ENCODE measurements at regions of chr3 and their contacts with region 1.

Region 1: GRCh38 chr3:190321789-190322603 is at the start of gene CLDN1:
- DNase-seq: peak; percentile 66
- H3K4me3 Mint-ChIP-seq: peak within 1 kb of the TSS; percentile 81
- H3K27ac Mint-ChIP-seq: peak within 1 kb of the TSS; percentile 5
- H3K4me1 Mint-ChIP-seq: peaks cover 51% of the 10 kb centered on the region
- H3K27me3 Mint-ChIP-seq: peaks cover 10% of the 10 kb centered on the region
- total RNA-seq, gene CLDN1: 5.7 and 6.0 TPM in 2 replicates

Region 2: DNA sequence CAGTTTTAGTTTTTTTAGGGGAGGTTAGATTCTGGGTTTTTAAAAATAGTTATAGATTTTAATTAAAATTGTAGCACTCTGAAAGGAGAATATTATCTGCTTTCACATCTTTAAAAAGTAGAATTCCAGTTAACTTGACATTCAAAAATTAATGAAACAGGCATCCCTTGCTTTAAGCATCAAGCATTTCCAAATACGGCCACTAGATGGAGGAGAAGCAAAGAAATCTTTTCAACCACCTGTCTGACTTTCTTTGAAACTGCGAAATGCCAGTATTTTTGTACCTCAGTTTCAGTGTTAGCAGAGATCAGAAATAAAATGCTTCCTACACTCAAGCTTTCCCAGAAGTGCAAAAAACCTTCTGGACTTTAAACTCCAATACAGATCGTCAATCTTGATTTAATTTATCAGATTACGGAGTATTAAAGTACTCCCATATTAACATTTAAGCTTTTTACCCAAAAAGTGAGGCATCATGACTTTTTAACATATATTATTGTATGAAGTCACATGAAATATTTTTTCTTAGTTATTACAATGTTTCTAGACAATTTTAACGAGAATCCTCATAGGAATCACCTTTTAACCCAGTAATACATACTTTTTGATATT is 354.6 kb before region 1 on chr3:
- intact Hi-C with region 1: loop called (anchors 5 kb)
- DNase-seq: no peak
- H3K4me3 Mint-ChIP-seq: no peak overlapping the region
- H3K27ac Mint-ChIP-seq: no peak overlapping the region
- H3K4me1 Mint-ChIP-seq: peaks cover 6% of the 10 kb centered on the region
- H3K27me3 Mint-ChIP-seq: peaks cover 19% of the 10 kb centered on the region

Region 3: GRCh38 chr3:190205739-190206138 is 116.3 kb before region 1 on chr3:
- intact Hi-C with region 1: loop called (anchors 5 kb)
- DNase-seq: no peak
- H3K4me3 Mint-ChIP-seq: no peak overlapping the region
- H3K27ac Mint-ChIP-seq: peak overlapping the region; percentile 31
- H3K4me1 Mint-ChIP-seq: peaks cover 11% of the 10 kb centered on the region
- H3K27me3 Mint-ChIP-seq: peaks cover 9% of the 10 kb centered on the region

Region 4: DNA sequence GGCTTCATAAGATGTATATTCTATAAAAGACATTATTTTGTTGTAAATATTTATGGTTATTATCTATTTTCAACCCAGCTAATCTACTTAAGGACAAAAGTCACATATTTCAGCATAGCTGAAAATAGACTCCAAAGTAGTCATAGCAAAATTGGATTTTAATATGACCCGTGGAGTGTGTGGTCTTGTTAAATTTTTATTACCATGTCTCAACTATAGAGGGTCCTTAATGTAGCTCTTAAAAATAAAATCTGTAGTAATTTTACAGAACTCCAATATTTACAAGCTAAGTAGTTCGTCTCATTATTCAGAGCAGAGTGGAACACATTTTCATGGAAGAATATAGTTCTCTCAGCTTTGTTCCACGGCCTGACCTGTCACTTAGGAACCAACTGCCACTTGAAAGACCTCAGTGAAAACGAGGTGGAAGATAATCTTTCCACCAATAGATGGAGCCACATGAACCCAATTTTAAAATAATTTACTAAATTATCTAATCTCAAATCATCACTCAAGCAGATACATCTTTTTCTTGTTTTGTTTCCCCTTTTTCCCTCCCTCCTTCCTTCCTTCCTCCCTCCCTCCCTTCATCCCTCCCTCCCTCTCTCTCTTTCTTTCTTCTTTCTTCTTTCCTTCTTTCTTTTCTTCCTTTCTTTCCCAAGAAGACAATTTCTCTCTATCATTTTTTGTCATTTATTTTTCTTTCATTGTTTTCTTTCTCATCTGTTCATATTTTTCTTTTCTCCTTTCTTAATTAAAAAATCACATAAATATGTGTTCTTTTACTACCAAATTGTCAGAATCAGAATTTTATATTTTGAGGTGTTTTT is 96.9 kb before region 1 on chr3:
- intact Hi-C with region 1: loop called (anchors 2 kb)
- DNase-seq: no peak
- H3K4me3 Mint-ChIP-seq: no peak overlapping the region
- H3K27ac Mint-ChIP-seq: no peak overlapping the region
- H3K4me1 Mint-ChIP-seq: peaks cover 4% of the 10 kb centered on the region
- H3K27me3 Mint-ChIP-seq: peaks cover 4% of the 10 kb centered on the region

Region 5: GRCh38 chr3:190424478-190425439 is 102.8 kb after region 1 on chr3:
- intact Hi-C with region 1: loop called (anchors 5 kb)
- DNase-seq: peak; percentile 28
- H3K4me3 Mint-ChIP-seq: no peak overlapping the region
- H3K27ac Mint-ChIP-seq: peak overlapping the region; percentile 38
- H3K4me1 Mint-ChIP-seq: peaks cover 6% of the 10 kb centered on the region
- H3K27me3 Mint-ChIP-seq: peaks cover 11% of the 10 kb centered on the region

Measured in activated T-helper 2 cell treated with anti-CD3 and anti-CD28 coated beads, Interferon-gamma antibody, Interleukin-2, Interleukin-4, amounts not matched to agents 10 μg/mL and 5 μg/mL and 100 μg/mL, durations not matched to agents 14 hours and 24 hours and 36 hours (primary cell).